ENCODE measurements at regions of chr9 and their contacts with region 1.

Region 1: GRCh38 chr9:28073270-28073669 is 500.0 kb upstream of the C9orf72 start:
- DNase-seq: no peak
- ATAC-seq: no peak

Region 2: GRCh38 chr9:27726244-27727081 is 346.8 kb before region 1 on chr9:
- intact Hi-C with region 1: loop called (anchors 10 kb)
- DNase-seq: peak; percentile 48
- ATAC-seq: peak; percentile 75

Measured in Right ventricle myocardium superior (tissue), 1 donor.